Breast epithelium (tissue), 4 donors: ENCODE measurements at regions of chr4 and their contacts with region 1.

Region 1: DNA sequence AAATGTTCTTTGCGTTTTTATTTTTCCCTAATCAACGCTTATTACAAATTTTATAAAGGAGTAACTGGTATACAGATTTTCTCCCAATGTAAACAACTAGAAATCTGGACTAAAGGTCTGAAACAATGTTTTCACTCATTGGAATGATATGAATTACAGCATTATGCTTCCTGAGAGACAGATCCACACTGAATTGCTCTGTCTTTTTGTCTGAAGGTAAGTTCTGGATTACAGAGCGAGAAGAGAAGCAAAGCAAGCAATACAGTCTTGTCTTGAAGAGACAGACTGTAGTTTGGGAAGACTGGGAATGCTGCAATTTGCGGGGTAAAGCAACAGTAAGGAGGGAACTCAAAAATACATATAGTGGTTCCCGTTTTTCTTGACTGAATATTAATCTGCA is 262.2 kb upstream of the PABPC4L start:
- DNase-seq: no peak
- H3K4me3 ChIP-seq: no peak overlapping the region
- H3K27ac ChIP-seq: no peak overlapping the region
- H3K4me1 ChIP-seq: no peaks in the 10 kb centered on the region
- H3K27me3 ChIP-seq: no peaks in the 10 kb centered on the region
- CTCF ChIP-seq: no peak
- POLR2A ChIP-seq: no peak

Region 2: DNA sequence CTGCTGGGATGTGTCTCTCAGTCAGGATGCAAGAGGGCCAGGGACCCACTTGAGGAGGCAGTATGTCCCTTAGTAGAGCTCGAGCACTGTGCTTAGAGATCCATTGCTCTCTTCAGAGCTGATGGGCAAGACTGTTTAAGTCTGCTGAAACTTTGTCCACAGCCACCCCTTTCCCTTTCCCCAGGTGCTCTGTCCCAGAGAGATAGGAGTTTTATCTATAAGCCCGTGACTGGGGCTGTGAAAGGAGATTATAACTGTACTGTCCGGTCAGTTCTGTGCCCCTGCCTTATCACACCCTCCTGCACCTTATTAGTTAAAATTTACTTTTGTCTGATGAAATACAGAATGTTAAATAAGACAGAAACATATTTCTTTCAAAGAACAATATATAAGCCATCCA is 640.6 kb before region 1 on chr4:
- intact Hi-C with region 1: no loop called
- DNase-seq: no peak
- H3K4me3 ChIP-seq: no peak overlapping the region
- H3K27ac ChIP-seq: no peak overlapping the region
- H3K4me1 ChIP-seq: no peaks in the 10 kb centered on the region
- H3K27me3 ChIP-seq: no peaks in the 10 kb centered on the region
- CTCF ChIP-seq: no peak
- POLR2A ChIP-seq: no peak

Region 3: DNA sequence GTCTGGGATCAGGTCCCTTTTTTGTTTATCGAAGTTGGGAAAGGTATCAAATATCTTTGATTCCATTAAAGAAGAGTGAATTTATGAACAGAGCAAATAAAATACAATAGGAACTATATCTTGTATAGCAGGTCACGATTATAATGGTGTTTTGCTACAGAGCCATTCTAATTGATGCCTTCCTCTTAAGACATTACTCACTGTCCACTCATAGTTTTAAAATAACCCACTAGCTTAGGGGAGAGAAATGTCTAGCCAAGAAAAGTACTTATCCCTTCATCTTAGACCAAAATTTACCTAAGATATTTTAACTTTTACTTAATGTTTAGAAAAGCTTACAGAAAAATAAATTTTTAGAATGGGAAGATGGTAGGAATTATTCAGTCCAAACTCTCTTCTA is 150.2 kb before region 1 on chr4:
- intact Hi-C with region 1: loop called (anchors 5 kb)
- DNase-seq: no peak
- H3K4me3 ChIP-seq: no peak overlapping the region
- H3K27ac ChIP-seq: no peak overlapping the region
- H3K4me1 ChIP-seq: no peaks in the 10 kb centered on the region
- H3K27me3 ChIP-seq: no peaks in the 10 kb centered on the region
- CTCF ChIP-seq: no peak
- POLR2A ChIP-seq: no peak

Region 4: GRCh38 chr4:134952775-134953543 is 489.2 kb after region 1 on chr4:
- intact Hi-C with region 1: no loop called
- DNase-seq: no peak
- H3K4me3 ChIP-seq: no peak overlapping the region
- H3K27ac ChIP-seq: no peak overlapping the region
- H3K4me1 ChIP-seq: no peaks in the 10 kb centered on the region
- H3K27me3 ChIP-seq: no peaks in the 10 kb centered on the region
- CTCF ChIP-seq: no peak
- POLR2A ChIP-seq: no peak